CD4-positive, alpha-beta memory T cell (primary cell): ENCODE measurements at regions of chr3 and their contacts with region 1.

Region 1: DNA sequence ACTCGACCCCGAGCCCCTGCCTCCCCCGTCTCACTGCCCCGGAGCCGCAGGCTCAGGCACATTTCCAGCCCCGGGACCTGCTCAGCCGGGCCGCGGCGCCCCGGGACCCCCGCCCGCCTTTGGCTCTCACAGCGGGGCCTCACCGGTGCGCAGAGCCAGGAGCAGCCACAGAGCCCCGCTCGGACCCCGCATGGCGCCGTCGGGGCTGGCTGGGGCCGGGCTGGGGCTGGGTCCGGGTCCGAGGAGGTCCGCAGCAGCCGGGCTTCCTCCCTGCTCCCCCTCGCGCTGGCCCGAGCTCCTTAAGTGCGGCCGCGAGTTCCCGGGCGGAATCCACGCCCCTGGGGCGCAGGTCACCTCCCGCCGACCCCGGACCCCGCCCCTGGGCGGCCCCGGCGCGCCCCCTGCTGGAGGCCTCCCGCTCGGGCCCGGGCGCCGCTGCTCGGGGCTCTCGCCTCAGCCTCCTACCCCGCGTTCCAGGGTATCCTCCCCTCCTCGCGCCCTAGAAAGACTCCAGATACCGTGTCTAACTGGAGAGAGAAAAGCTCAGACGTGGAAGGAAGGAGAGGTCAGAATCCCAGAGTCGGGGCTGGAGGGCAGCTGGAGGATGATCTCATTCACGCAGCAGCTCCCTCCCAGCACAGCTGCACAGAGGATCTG is at the start of gene MELTF:
- DNase-seq: peak; percentile 55 to 76 (median 68)
- H3K4me3 ChIP-seq: peak within 1 kb of the TSS; percentile 11 to 51
- H3K4me3 Mint-ChIP-seq: peak within 1 kb of the TSS; percentile 67 to 83 (median 81)
- H3K27ac ChIP-seq: peak within 1 kb of the TSS; percentile 21
- H3K27ac Mint-ChIP-seq: peak within 1 kb of the TSS in 4 of 7 donors; percentile 29 to 78 (median 58)
- H3K4me1 ChIP-seq: peaks cover 3% of the 10 kb centered on the region
- H3K4me1 Mint-ChIP-seq: peaks cover 0 to 8% (median 4%) of the 10 kb centered on the region in 4 donors
- H3K27me3 ChIP-seq: no peaks in the 10 kb centered on the region
- H3K27me3 Mint-ChIP-seq: no peaks in the 10 kb centered on the region
- total RNA-seq, gene MELTF: 1.2 to 1.4 TPM

Region 2: DNA sequence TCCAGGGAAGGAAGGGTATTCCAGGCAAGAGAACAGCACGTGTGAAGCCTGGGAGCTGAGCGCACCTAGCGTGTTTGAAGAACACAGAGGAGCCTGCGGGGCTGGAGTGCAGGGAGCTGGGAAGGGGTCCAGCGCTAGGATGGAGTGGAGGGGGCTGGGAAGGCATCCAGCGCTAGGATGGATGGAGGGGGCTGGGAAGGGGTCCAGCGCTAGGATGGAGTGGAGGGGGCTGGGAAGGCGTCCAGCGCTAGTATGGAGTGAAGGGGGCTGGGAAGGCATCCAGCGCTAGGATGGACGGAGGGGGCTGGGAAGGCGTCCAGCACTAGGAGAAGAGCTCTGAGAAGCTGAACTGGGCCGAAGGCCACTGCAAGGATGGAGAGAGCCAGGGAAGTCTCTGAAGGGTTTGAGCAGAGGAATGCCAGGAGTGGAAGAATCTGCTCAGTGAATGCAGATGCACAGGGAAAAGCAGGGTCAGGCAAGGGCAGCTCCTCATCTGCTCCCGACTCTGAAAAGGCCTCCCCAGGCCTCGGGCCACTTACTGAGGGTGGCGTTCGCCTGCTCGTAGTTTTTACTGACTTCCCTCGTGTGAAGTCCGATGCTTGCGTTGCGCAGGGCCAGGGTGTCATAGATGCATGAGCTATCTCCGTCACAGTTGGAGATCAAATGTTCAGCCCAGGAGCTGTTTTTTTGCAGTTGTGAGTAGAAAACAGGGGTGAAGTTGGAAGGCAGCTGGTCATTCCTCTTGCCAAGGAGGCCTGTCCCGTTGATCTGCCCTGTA is 1269.1 kb before region 1 on chr3:
- CTCF ChIA-PET with region 1: no interaction called
- POLR2A ChIA-PET with region 1: no interaction called
- intact Hi-C with region 1: no loop called
- DNase-seq: no peak
- H3K4me3 ChIP-seq: no peak overlapping the region
- H3K4me3 Mint-ChIP-seq: no peak overlapping the region
- H3K27ac ChIP-seq: no peak overlapping the region
- H3K27ac Mint-ChIP-seq: no peak overlapping the region
- H3K4me1 ChIP-seq: no peaks in the 10 kb centered on the region
- H3K4me1 Mint-ChIP-seq: peaks cover 0 to 6% (median 5%) of the 10 kb centered on the region in 4 donors
- H3K27me3 ChIP-seq: peaks cover 3% of the 10 kb centered on the region
- H3K27me3 Mint-ChIP-seq: peaks cover 32 to 34% of the 10 kb centered on the region in 2 donors

Region 3: GRCh38 chr3:196596355-196596754 is 433.3 kb before region 1 on chr3:
- CTCF ChIA-PET with region 1: no interaction called
- POLR2A ChIA-PET with region 1: no interaction called
- intact Hi-C with region 1: no loop called
- DNase-seq: no peak
- H3K4me3 ChIP-seq: no peak overlapping the region
- H3K4me3 Mint-ChIP-seq: peak overlapping the region in 1 of 8 donors; percentile 18
- H3K27ac ChIP-seq: no peak overlapping the region
- H3K27ac Mint-ChIP-seq: peak overlapping the region in 2 of 7 donors; percentile 1 to 39
- H3K4me1 ChIP-seq: peaks cover 7% of the 10 kb centered on the region
- H3K4me1 Mint-ChIP-seq: peaks cover 6 to 18% (median 10%) of the 10 kb centered on the region in 4 donors
- H3K27me3 ChIP-seq: no peaks in the 10 kb centered on the region
- H3K27me3 Mint-ChIP-seq: peaks cover 2 to 5% of the 10 kb centered on the region in 2 donors

Region 4: DNA sequence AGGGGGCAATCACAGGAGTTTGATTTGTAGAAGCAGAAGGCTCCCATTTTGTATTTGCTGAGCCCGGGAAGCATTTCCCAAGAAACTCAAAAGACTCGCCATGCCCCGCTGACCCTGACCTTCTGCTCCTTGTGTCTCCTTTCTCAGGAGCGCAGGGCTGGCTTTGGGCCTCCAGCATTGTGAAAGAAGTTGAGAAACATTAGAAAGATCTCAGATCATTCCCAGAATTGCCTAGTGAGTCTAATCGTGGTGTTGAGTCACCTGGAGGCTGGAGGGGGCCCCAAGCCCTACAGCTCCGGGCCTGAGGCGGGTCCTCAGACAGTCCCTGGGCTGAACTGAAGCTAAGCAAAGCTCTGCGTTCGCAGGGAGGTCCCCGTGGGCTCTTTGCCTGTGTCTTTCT is 50.1 kb before region 1 on chr3:
- CTCF ChIA-PET with region 1: interaction called, 3 read pairs
- POLR2A ChIA-PET with region 1: no interaction called
- intact Hi-C with region 1: loop called (anchors 2 kb)
- DNase-seq: no peak
- H3K4me3 ChIP-seq: no peak overlapping the region
- H3K4me3 Mint-ChIP-seq: no peak overlapping the region
- H3K27ac ChIP-seq: no peak overlapping the region
- H3K27ac Mint-ChIP-seq: no peak overlapping the region
- H3K4me1 ChIP-seq: no peaks in the 10 kb centered on the region
- H3K4me1 Mint-ChIP-seq: peaks cover 3 to 8% (median 4%) of the 10 kb centered on the region in 4 donors
- H3K27me3 ChIP-seq: no peaks in the 10 kb centered on the region
- H3K27me3 Mint-ChIP-seq: peaks cover 6 to 12% of the 10 kb centered on the region in 2 donors

Region 5: GRCh38 chr3:197002701-197003454 is 26.8 kb before region 1 on chr3:
- CTCF ChIA-PET with region 1: interaction called, 6 read pairs
- POLR2A ChIA-PET with region 1: interaction called, 3 read pairs
- intact Hi-C with region 1: loop called (anchors 1 kb)
- DNase-seq: peak; percentile 77 to 86 (median 80)
- H3K4me3 ChIP-seq: no peak overlapping the region
- H3K4me3 Mint-ChIP-seq: no peak overlapping the region
- H3K27ac ChIP-seq: peak overlapping the region; percentile 47
- H3K27ac Mint-ChIP-seq: no peak overlapping the region
- H3K4me1 ChIP-seq: peaks cover 9% of the 10 kb centered on the region
- H3K4me1 Mint-ChIP-seq: peaks cover 5 to 17% (median 8%) of the 10 kb centered on the region in 4 donors
- H3K27me3 ChIP-seq: no peaks in the 10 kb centered on the region
- H3K27me3 Mint-ChIP-seq: no peaks in the 10 kb centered on the region

Region 6: GRCh38 chr3:197041875-197042488 is 12.3 kb after region 1 on chr3:
- CTCF ChIA-PET with region 1: interaction called, 17 read pairs
- POLR2A ChIA-PET with region 1: no interaction called
- intact Hi-C with region 1: no loop called
- DNase-seq: no peak
- H3K4me3 ChIP-seq: no peak overlapping the region
- H3K4me3 Mint-ChIP-seq: no peak overlapping the region
- H3K27ac ChIP-seq: no peak overlapping the region
- H3K27ac Mint-ChIP-seq: no peak overlapping the region
- H3K4me1 ChIP-seq: no peaks in the 10 kb centered on the region
- H3K4me1 Mint-ChIP-seq: no peaks in the 10 kb centered on the region
- H3K27me3 ChIP-seq: no peaks in the 10 kb centered on the region
- H3K27me3 Mint-ChIP-seq: no peaks in the 10 kb centered on the region

Region 7: DNA sequence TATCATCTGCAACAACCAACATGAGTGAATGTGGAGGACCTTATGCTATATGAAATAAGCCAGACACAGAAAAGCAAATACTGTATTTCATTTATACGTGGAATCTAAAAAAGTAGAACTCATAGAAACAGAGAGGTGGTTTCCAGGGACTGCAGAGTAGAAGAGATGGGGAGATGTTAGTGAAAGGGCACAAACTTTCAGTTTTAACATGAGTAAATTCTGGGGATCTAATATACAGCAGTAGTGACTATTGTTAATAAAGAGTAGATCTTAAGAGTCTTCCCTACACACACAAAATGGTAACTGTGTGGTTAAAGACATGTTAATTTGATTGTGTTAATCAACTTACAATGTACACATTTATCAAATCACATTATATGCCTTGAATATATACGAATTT is 20.9 kb after region 1 on chr3:
- CTCF ChIA-PET with region 1: interaction called, 17 read pairs
- POLR2A ChIA-PET with region 1: no interaction called
- intact Hi-C with region 1: no loop called
- DNase-seq: no peak
- H3K4me3 ChIP-seq: no peak overlapping the region
- H3K4me3 Mint-ChIP-seq: no peak overlapping the region
- H3K27ac ChIP-seq: no peak overlapping the region
- H3K27ac Mint-ChIP-seq: peak overlapping the region in 2 of 7 donors; percentile 4 to 8
- H3K4me1 ChIP-seq: no peaks in the 10 kb centered on the region
- H3K4me1 Mint-ChIP-seq: peaks cover 0 to 2% (median 0%) of the 10 kb centered on the region in 4 donors
- H3K27me3 ChIP-seq: no peaks in the 10 kb centered on the region
- H3K27me3 Mint-ChIP-seq: no peaks in the 10 kb centered on the region